ENCODE measurements at regions of chr9 and their contacts with region 1.

Region 1: DNA sequence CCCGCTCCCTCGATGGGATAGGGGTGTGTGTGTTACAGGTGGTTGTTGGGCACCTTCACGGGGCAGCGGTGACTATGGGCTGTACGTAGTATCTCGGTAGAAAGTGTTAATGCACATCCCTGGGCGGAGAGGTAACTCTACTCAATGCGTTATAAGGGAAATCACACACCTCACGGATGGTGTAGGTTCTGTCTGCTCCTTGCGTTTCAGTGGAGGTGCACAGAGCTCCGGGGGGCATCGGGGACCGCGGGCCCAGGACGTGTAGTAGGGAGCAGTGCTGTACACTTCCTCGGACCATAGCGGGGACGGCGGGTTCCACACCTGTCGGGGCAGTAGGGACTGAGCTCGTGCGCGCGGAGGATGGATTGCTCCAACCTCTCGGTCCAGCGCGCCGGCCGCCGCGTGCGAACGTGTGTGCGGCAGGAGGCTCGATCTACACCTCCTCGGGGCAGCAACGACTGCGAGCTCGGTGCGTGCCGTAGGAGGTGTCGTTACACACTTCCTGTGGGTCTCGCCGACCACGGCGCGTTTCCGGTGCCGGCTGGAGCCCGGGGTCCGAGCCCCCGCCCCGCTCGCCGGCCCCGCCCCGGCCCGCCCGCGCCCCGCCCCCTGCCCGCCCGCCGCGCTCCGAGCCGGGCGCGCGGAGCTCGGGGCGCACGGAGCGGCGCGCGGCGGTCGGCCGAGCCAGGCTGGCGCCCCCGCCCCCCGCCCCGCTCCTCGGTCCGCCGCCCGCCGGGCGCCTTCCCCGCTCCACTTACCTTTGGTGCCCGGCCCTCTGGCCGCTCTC is at the start of gene KIAA1958:
- DNase-seq: peak; percentile 36 to 87
- H3K4me3 ChIP-seq: peak within 1 kb of the TSS; percentile 96 to 98
- H3K27ac ChIP-seq: peak within 1 kb of the TSS; percentile 90 to 91
- H3K4me1 ChIP-seq: peaks cover 0 to 35% (median 7%) of the 10 kb centered on the region in 4 donors
- H3K27me3 ChIP-seq: no peaks in the 10 kb centered on the region
- CTCF ChIP-seq: no peak

Region 2: DNA sequence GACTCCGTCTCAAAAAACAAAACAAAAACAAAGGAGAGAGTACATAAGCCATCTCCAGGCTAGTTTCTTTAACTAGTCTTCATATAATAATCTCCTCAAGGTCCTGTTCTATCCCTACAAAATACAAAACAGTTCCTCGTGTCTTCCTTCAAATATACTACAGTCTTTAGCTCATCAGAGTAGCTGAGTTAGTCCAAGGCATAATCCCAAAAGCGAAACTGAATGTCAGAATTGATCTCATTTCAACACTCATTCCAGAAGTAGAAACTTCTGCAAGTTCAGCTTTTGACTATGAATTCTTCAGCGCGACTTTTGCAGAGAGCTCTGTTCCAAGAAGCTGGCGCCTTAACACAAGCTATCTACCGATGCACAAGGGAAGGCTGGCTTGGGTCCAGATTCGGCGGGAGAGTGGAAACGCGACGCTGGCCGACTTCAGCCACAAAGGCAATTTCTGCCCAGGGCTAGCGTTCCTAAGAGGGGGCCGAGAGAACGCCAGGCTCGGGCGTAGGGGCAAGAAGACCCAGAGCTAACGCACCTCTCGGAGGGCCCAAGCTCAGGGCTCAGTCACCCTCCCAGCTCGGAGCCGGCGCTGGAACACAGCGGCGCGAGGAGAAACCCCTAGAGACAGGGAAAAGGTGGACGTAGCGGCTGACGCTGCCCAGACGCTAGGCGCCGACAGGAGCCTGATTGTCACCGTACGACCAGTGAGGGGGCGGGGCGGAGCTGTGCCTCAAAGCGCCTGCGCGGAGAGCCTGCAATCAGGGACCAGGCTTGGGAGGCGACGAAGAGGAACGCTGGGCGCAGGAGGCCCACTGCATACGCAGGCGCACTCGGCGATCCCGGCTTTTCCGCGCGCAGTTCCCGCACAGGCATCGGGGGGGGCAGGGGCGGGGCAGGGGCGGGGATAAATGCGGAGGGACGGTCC is 107.0 kb before region 1 on chr9:
- intact Hi-C with region 1: loop called (anchors 10 kb)
- DNase-seq: peak; percentile 99 to 100
- H3K4me3 ChIP-seq: peak overlapping the region; percentile 78 to 93
- H3K27ac ChIP-seq: peak overlapping the region; percentile 95 to 99
- H3K4me1 ChIP-seq: peaks cover 0 to 56% (median 13%) of the 10 kb centered on the region in 4 donors
- H3K27me3 ChIP-seq: no peaks in the 10 kb centered on the region
- CTCF ChIP-seq: peak in 1 of 2 experiments; percentile 26

Region 3: GRCh38 chr9:112532427-112532826 is 46.0 kb after region 1 on chr9:
- intact Hi-C with region 1: no loop called
- DNase-seq: peak; percentile 54 to 65
- H3K4me3 ChIP-seq: no peak overlapping the region
- H3K27ac ChIP-seq: no peak overlapping the region
- H3K4me1 ChIP-seq: peaks cover 0 to 21% (median 4%) of the 10 kb centered on the region in 4 donors
- H3K27me3 ChIP-seq: no peaks in the 10 kb centered on the region
- CTCF ChIP-seq: no peak

Region 4: DNA sequence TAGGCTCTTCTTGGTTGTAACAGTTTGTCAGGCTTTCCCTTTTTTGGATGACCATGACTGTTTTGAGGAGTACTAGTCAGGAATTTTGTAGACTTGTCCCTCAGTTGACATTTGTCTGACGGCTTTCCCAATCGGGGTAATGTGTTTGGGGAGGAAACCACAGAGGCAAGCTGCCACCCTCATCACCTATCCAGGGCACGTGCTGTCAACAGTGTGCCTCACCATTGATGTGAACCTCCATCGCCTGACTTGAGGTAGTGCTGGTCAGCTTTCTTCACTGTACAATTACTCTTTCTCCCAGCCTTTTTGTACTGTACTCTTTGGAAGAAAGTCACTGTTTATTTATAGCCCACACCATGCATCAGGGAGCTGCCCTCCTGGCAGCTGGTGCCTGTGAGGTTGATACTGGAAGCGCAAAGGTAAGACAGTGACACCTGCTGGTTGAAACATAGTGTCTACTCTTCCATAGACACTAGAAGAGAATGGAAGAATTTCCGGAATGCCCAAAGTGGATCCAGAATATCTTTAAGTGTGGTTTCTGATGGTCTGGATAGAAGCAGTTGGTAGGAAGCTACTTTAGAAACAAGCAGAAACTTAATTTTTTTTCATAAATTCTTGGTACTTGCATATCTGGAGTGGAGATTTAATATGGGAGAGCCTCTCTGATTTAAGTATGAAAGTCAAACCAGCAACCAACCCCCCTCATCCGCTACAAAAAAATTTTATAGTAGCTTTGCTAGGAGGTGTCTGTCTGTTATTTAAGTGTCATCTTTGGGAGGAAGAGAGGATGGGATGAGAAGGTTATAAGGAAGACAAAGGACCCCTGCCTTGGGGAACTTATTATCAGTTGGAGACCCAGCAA is 333.5 kb after region 1 on chr9:
- intact Hi-C with region 1: loop called (anchors 10 kb)
- DNase-seq: peak; percentile 49 to 76
- H3K4me3 ChIP-seq: no peak overlapping the region
- H3K27ac ChIP-seq: peak overlapping the region in 1 of 2 donors; percentile 7
- H3K4me1 ChIP-seq: peaks cover 0 to 30% (median 5%) of the 10 kb centered on the region in 4 donors
- H3K27me3 ChIP-seq: no peaks in the 10 kb centered on the region
- CTCF ChIP-seq: peak; percentile 66 to 70